ENCODE measurements at regions of chr4 and their contacts with region 1.

Region 1: GRCh38 chr4:154399259-154399974 is 92.2 kb downstream of the DCHS2 start:
- DNase-seq: peak in 1 of 3 donors; percentile 25
- ATAC-seq: peak; percentile 27
- H3K4me3 ChIP-seq: no peak overlapping the region
- H3K4me1 ChIP-seq: no peaks in the 10 kb centered on the region
- CTCF ChIP-seq: no peak

Region 2: GRCh38 chr4:154506253-154506652 is 106.8 kb after region 1 on chr4:
- intact Hi-C with region 1: loop called (anchors 5 kb)
- DNase-seq: peak in 1 of 3 donors; percentile 32
- ATAC-seq: no peak
- H3K4me3 ChIP-seq: no peak overlapping the region
- H3K4me1 ChIP-seq: no peaks in the 10 kb centered on the region
- CTCF ChIP-seq: no peak

Region 3: DNA sequence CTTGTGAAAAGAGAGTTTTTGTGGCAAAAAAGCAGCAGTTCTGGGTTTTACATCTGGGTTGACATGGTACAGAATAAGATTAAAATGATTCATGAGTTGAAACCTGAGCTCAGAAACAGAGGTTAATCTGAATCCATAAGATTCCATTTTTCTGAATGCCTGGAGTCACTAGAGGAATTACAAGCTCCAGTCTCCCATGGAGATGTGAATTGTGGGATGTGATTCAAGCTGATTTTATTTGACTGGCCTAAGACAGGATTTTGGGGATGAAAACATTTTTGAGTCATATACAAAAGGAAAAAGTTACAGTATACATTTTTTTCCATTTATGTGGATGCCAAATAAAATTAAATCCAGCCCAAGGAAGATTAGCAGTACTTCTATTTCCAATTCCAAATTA is 542.8 kb after region 1 on chr4:
- intact Hi-C with region 1: no loop called
- DNase-seq: no peak
- ATAC-seq: no peak
- H3K4me3 ChIP-seq: no peak overlapping the region
- H3K4me1 ChIP-seq: no peaks in the 10 kb centered on the region
- CTCF ChIP-seq: no peak